ENCODE measurements at regions of chr9 and their contacts with region 1.

Region 1: DNA sequence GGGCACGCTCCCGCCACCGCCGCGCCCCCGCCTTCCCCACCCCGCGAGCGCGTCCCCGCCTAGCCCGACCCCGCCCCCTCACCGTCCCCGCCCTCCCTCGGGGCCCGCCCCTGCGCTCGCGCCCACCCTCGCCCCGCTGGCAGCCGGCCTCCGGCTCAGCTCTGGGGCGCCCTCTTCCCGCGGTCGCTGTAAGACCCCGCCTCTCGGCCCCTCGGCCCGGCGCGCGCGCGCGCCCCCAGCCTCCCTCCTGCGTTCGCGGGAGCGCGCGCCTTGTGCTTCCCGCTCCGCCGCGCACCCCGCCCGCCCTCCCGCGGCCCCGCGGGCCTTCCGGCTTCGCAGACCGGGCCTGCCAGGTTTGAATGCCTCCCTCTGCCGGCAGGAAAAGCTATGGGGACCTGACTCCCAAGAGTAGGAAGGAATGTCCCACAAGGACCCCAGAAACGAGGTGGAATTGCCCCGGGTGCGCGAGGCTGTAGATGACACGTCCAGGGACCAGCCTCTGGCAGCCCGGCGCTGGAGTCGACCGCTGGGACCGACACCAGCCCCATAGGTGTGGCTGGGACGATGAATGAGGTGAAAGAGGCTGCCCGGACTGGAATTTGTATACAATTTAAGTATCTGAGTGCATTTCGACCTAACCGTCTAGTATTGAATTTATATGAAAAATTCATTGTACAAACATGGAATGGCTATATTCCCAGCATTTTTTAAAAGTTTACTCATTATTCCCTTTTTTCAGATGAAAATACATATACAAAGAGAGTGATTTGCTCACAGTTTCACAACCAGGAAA is 416 bp upstream of the PTBP3 start:
- DNase-seq: peak; percentile 95
- ATAC-seq: peak; percentile 85
- H3K4me3 Mint-ChIP-seq: peak overlapping the region; percentile 93
- H3K27ac Mint-ChIP-seq: peak overlapping the region; percentile 99
- H3K4me1 Mint-ChIP-seq: peaks cover 35% of the 10 kb centered on the region
- H3K27me3 Mint-ChIP-seq: peaks cover 5% of the 10 kb centered on the region

Region 2: DNA sequence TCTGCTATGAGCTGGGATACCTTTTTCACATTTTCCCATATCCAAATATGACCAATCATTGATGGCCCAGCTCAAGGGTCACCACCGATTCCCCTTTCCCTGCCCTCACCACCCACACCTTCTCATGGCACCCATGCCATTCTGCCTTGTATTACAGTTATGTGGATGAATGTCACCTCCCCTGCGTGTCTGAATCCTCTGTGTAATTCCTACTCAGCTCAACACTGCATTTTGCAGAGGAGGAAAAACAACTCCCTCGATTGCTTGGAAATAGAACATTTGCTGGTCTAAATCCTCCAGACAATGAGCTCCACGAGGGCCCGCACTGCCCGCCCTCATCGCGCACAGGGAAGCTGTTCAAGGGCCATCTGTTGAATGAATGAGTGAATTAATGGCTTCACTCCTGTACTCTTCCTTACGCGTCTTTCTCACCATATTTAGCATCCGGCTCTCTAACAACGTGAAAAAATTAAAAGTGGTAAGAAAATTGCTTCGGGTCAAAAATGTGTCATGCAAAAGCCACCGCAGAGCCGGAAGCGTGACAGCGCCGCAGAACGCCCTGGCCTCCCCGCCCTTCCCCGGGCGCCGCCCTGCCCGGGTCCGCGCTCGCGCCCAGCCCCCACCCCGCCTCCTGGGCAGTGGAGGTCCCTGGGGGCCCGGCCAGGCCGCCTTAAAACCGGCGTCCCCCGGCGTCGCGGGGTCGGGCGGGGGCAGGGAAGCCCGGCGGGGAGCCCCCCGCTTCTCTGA is 159.4 kb before region 1 on chr9:
- CTCF ChIA-PET with region 1: no interaction called
- POLR2A ChIA-PET with region 1: interaction called, 23 read pairs
- DNase-seq: peak; percentile 88
- ATAC-seq: peak; percentile 89
- H3K4me3 Mint-ChIP-seq: peak overlapping the region; percentile 87
- H3K27ac Mint-ChIP-seq: peak overlapping the region; percentile 95
- H3K4me1 Mint-ChIP-seq: peaks cover 70% of the 10 kb centered on the region
- H3K27me3 Mint-ChIP-seq: peaks cover 6% of the 10 kb centered on the region

Region 3: DNA sequence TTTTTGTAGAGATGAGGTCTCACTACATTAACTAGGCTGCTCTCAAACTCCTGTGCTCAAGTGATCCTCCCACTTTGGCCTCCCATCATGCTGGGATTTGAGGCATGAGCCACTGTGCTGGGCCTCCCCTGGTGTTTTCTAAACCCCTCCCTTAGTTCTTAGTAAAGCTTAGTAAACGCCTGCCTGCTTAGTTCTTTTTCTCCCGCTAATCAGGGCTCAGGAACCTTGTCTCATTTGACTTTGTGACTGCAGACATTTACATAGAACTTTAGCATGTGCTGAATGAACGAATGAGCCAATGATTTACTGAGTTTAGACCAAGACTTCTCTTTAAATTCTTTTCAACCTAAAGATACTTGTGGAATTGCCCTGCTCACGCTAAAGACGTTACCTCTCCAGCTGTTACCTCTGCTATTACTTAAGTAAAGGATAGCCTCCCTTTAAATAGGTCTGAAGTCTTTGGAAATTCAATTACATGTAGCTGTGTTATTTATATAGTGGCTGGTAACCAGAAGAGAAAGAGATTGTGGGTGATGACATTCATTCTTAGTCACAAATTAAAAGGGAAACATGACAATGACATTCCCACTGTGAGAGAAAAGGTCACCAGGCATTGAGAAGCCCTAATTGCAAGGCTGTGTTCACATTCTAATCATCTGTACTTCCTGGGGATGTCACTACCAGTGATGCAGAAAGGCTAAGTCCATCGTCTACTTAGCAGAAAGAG is 140.1 kb before region 1 on chr9:
- CTCF ChIA-PET with region 1: no interaction called
- POLR2A ChIA-PET with region 1: no interaction called
- DNase-seq: no peak
- ATAC-seq: no peak
- H3K4me3 Mint-ChIP-seq: no peak overlapping the region
- H3K27ac Mint-ChIP-seq: no peak overlapping the region
- H3K4me1 Mint-ChIP-seq: peaks cover 3% of the 10 kb centered on the region
- H3K27me3 Mint-ChIP-seq: no peaks in the 10 kb centered on the region

Region 4: GRCh38 chr9:112315331-112316257 is 18.2 kb before region 1 on chr9:
- CTCF ChIA-PET with region 1: interaction called, 8 read pairs
- POLR2A ChIA-PET with region 1: interaction called, 33 read pairs
- DNase-seq: no peak
- ATAC-seq: peak; percentile 52
- H3K4me3 Mint-ChIP-seq: peak overlapping the region; percentile 53
- H3K27ac Mint-ChIP-seq: peak overlapping the region; percentile 96
- H3K4me1 Mint-ChIP-seq: peaks cover 62% of the 10 kb centered on the region
- H3K27me3 Mint-ChIP-seq: no peaks in the 10 kb centered on the region

Region 5: GRCh38 chr9:112404508-112404932 is 70.7 kb after region 1 on chr9:
- CTCF ChIA-PET with region 1: no interaction called
- POLR2A ChIA-PET with region 1: no interaction called
- DNase-seq: no peak
- ATAC-seq: no peak
- H3K4me3 Mint-ChIP-seq: no peak overlapping the region
- H3K27ac Mint-ChIP-seq: no peak overlapping the region
- H3K4me1 Mint-ChIP-seq: no peaks in the 10 kb centered on the region
- H3K27me3 Mint-ChIP-seq: no peaks in the 10 kb centered on the region

Region 6: DNA sequence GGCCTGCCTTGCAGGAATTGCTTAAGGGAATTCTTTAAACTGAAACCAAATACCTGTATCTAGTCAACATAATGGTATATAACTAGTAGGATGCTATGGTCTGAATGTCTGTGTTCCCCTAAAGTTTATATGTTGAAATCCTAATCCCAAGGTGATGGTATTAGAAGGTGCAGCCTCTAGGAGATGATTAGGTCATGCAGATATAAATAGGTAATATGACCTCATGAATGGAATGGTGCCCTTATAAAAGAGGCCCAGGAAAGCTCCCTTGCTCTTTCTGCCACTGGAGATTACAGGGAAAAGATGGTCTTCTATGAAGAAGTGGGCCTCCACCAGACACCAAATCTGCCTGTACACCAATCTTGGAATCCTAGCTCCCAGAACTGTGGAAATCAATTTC is 145.4 kb after region 1 on chr9:
- CTCF ChIA-PET with region 1: no interaction called
- POLR2A ChIA-PET with region 1: no interaction called
- DNase-seq: no peak
- ATAC-seq: no peak
- H3K4me3 Mint-ChIP-seq: no peak overlapping the region
- H3K27ac Mint-ChIP-seq: no peak overlapping the region
- H3K4me1 Mint-ChIP-seq: no peaks in the 10 kb centered on the region
- H3K27me3 Mint-ChIP-seq: no peaks in the 10 kb centered on the region

Region 7: DNA sequence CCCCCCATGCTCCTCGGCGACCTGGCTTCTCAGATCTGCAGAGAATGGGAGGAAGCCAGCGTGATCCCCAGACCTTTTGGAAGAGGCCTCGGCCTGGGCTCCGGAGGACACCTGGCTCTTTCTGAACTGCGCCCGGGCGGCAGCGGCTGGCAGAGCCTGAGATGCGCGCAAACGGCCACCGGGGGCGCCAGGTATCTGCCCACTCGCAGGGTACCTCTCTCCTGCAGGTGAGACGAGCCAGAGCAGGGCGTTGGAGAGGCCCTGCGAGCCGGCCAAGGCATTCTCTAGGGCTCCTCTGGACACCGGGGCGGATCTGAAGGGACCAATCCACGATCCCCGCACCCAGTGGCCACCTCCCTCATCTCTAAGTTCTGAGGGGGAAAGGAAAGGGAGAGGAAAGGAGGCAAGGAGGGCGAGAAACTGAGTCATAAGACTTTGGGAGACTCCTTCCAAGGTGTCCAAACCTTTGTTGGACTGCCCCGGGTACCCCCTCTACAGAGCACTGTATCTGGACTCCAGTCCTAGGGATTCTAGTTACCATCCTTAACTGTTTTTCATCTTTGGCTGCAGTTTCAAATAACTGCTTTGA is 611.9 kb after region 1 on chr9:
- CTCF ChIA-PET with region 1: no interaction called
- POLR2A ChIA-PET with region 1: no interaction called
- DNase-seq: no peak
- ATAC-seq: no peak
- H3K4me3 Mint-ChIP-seq: no peak overlapping the region
- H3K27ac Mint-ChIP-seq: no peak overlapping the region
- H3K4me1 Mint-ChIP-seq: no peaks in the 10 kb centered on the region
- H3K27me3 Mint-ChIP-seq: peaks cover 2% of the 10 kb centered on the region